ENCODE measurements at regions of chr13 and their contacts with region 1.

Region 1: GRCh38 chr13:49606747-49607648 is 21.3 kb upstream of the ARL11 start:
- DNase-seq: peak; percentile 93
- H3K4me3 ChIP-seq: peak overlapping the region; percentile 53
- H3K27ac ChIP-seq: peak overlapping the region; percentile 71
- H3K4me1 ChIP-seq: peaks cover 57% of the 10 kb centered on the region
- CTCF ChIP-seq: peak; percentile 98

Region 2: DNA sequence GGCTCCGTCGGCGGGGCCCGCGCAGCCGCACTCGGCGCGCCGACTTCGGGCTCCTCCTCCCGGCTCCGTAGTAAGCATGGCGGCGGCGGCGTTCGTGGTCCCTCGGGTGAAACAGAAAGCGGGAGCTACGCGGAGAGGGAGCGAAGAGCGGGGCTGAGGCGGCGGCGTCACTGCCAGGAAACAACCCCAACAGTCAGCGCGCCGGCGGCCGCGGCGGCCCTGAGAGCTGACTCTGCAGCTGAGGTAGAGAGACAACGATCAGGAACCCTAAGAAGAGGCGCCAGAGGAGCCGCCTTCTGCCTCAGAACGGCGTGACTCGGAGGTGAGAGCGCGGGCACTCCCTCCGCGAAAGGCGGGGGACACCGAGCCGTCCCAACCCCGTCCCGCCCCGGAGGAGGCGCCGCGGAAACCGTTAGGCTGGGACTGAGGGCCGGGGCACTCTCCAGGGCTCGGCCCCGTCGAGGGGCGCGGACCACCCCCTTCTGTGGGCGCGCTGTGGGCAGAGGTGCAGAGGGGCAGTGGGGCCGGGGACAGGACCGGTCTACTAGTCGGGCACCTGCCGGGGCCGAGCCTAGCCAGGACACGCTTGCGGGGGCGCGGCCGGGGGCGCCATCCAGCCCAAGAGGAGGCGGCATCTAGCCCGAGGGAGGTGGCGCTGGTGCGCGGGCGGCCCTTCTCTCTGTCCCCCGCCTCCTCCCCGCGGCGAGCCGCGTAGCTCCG is 631.0 kb before region 1 on chr13 and contains the start of gene FNDC3A:
- CTCF ChIA-PET with region 1: no interaction called
- POLR2A ChIA-PET with region 1: no interaction called
- intact Hi-C with region 1: loop called (anchors 10 kb)
- DNase-seq: peak; percentile 82
- H3K4me3 ChIP-seq: peak within 1 kb of the TSS; percentile 89
- H3K27ac ChIP-seq: peak within 1 kb of the TSS; percentile 91
- H3K4me1 ChIP-seq: peaks cover 35% of the 10 kb centered on the region
- CTCF ChIP-seq: peak; percentile 43; the same call in 1 of the 2 replicates
- total RNA-seq, gene FNDC3A: 33.0 and 38.7 TPM in 2 replicates

Region 3: GRCh38 chr13:49295244-49295643 is 311.8 kb before region 1 on chr13:
- CTCF ChIA-PET with region 1: interaction called, 3 read pairs
- POLR2A ChIA-PET with region 1: interaction called, 11 read pairs
- intact Hi-C with region 1: no loop called
- DNase-seq: no peak
- H3K4me3 ChIP-seq: no peak overlapping the region
- H3K27ac ChIP-seq: no peak overlapping the region
- H3K4me1 ChIP-seq: peaks cover 12% of the 10 kb centered on the region
- CTCF ChIP-seq: no peak

Region 4: DNA sequence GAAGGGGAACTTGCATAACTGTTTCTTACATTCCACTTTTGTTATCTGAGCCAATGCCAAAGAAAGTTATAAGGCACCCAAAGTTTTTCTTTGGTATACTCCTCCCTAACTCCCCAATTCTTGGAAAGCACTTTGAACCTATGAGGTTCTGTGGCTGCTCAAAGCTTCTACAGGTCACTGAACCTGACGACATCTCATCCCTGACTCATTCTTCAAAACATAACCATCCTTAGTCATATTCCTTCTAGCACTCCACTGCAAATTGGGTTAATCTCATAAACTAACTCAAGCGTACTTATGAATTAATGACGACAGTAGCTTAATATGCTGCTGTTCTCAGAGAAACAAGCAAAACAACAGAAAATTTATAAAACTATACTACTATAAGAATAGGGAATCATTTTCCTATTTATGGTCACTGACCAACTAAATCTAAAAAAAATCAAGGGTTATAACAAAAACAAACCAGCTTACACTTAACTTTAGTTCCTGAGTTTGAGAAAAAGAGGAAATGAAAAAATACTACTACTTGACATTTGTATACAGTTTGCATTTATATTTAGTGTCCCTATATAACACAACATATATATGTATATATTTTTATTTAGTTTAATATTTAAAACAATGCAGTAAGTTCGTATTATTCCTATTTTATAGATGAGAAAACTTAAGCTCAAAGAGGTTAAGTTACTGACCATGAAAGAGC is 232.3 kb before region 1 on chr13:
- CTCF ChIA-PET with region 1: no interaction called
- POLR2A ChIA-PET with region 1: interaction called, 3 read pairs
- intact Hi-C with region 1: loop called (anchors 5 kb)
- DNase-seq: peak; percentile 23
- H3K4me3 ChIP-seq: peak overlapping the region; percentile 45
- H3K27ac ChIP-seq: peak overlapping the region; percentile 98
- H3K4me1 ChIP-seq: peaks cover 71% of the 10 kb centered on the region
- CTCF ChIP-seq: no peak

Region 5: GRCh38 chr13:49495783-49496762 is 110.9 kb before region 1 on chr13 and contains the start of gene PHF11:
- CTCF ChIA-PET with region 1: no interaction called
- POLR2A ChIA-PET with region 1: interaction called, 8 read pairs
- intact Hi-C with region 1: loop called (anchors 1 kb)
- DNase-seq: peak; percentile 94
- H3K4me3 ChIP-seq: peak within 1 kb of the TSS; percentile 76
- H3K27ac ChIP-seq: peak within 1 kb of the TSS; percentile 91
- H3K4me1 ChIP-seq: peaks cover 44% of the 10 kb centered on the region
- CTCF ChIP-seq: peak; percentile 36; the same call in 1 of the 2 replicates
- total RNA-seq, gene PHF11: 29.9 and 32.8 TPM in 2 replicates

Region 6: DNA sequence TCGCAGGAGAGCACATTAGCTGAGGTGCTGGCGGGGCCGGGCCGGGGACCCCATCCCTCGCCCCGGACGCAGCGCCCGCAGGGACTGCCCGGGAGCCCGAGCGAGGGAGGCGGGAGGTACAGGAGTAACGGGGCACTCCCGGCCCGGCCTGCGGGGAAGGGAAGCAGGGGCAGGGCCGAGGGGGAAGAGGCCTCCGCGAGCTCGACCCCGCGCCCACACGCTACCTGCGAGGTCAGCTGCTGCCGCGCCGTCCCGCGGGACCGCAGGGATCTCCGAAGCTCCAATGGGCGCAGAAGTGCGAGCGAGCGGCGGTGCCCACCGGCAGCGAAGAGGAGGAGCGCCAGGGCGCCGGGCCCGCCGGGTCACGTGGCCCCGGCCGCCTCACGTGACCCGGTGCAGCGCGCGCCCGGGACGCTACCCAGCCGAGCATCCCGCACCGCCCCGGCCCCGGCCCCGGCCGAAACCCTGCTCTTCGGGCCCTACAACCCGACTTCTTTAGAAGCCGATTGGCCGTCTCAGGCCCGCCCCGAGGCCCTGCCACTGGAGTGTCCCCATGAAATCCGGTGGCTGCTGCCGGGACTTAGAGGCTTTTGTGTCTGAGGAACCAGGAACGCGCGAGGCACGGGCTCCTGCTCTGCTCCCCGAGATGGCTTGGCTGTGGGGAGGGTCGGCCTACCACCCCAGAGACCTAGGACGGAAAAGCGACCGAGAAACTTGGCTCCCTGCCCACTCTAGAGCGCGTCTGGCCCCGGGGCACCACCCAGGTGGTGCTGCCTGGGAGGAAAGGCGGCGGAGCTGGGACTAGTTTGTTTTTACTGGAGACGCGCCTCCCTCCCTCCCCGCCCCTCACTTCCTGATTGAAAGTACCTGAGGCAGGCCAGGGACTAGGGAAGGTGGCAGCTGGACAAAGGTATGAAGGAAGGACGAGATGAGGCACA is 21.5 kb before region 1 on chr13 and contains the start of gene RCBTB1:
- CTCF ChIA-PET with region 1: no interaction called
- POLR2A ChIA-PET with region 1: interaction called, 13 read pairs
- intact Hi-C with region 1: no loop called
- DNase-seq: peak; percentile 84
- H3K4me3 ChIP-seq: peak within 1 kb of the TSS; percentile 90
- H3K27ac ChIP-seq: peak within 1 kb of the TSS; percentile 71
- H3K4me1 ChIP-seq: peaks cover 31% of the 10 kb centered on the region
- CTCF ChIP-seq: no peak
- total RNA-seq, gene RCBTB1: 13.4 and 15.1 TPM in 2 replicates

Region 7: GRCh38 chr13:49627831-49628652 is 21.0 kb after region 1 on chr13 and contains the start of gene ARL11:
- CTCF ChIA-PET with region 1: interaction called, 5 read pairs
- POLR2A ChIA-PET with region 1: interaction called, 20 read pairs
- intact Hi-C with region 1: no loop called
- DNase-seq: peak; percentile 93
- H3K4me3 ChIP-seq: peak within 1 kb of the TSS; percentile 90
- H3K27ac ChIP-seq: peak within 1 kb of the TSS; percentile 72
- H3K4me1 ChIP-seq: peaks cover 34% of the 10 kb centered on the region
- CTCF ChIP-seq: no peak
- total RNA-seq, gene ARL11: 5.9 and 8.3 TPM in 2 replicates

Region 8: GRCh38 chr13:49652355-49653305 is 45.6 kb after region 1 on chr13:
- CTCF ChIA-PET with region 1: no interaction called
- POLR2A ChIA-PET with region 1: no interaction called
- intact Hi-C with region 1: no loop called
- DNase-seq: peak; percentile 63
- H3K4me3 ChIP-seq: no peak overlapping the region
- H3K27ac ChIP-seq: no peak overlapping the region
- H3K4me1 ChIP-seq: no peaks in the 10 kb centered on the region
- CTCF ChIP-seq: peak; percentile 75